ENCODE measurements at regions of chr11 and their contacts with region 1.

Region 1: GRCh38 chr11:107834995-107835394 is 23.6 kb downstream of the SLC35F2 start:
- DNase-seq: no peak
- H3K4me3 ChIP-seq: no peak overlapping the region
- H3K27ac ChIP-seq: no peak overlapping the region
- H3K4me1 ChIP-seq: peaks cover 0 to 5% (median 2%) of the 10 kb centered on the region in 4 experiments; a peak in 4 of 7 replicates
- H3K27me3 ChIP-seq: peaks cover 0 to 2% (median 0%) of the 10 kb centered on the region in 4 experiments; a peak in 1 of 7 replicates
- CTCF ChIP-seq: peak in 1 of 3 experiments; percentile 13; a peak in 1 of 4 replicates
- EP300 ChIP-seq: no peak
- POLR2A ChIP-seq: no peak
- RAD21 ChIP-seq: no peak

Region 2: GRCh38 chr11:107496011-107496410 is 339.0 kb before region 1 on chr11:
- CTCF ChIA-PET with region 1: no interaction called
- POLR2A ChIA-PET with region 1: no interaction called
- DNase-seq: no peak
- H3K4me3 ChIP-seq: no peak overlapping the region
- H3K27ac ChIP-seq: no peak overlapping the region
- H3K4me1 ChIP-seq: no peaks in the 10 kb centered on the region
- H3K27me3 ChIP-seq: no peaks in the 10 kb centered on the region
- CTCF ChIP-seq: no peak
- EP300 ChIP-seq: no peak
- POLR2A ChIP-seq: no peak
- RAD21 ChIP-seq: no peak

Region 3: GRCh38 chr11:107824668-107825369 is 10.2 kb before region 1 on chr11:
- CTCF ChIA-PET with region 1: interaction called, 10 read pairs
- POLR2A ChIA-PET with region 1: no interaction called
- DNase-seq: no peak
- H3K4me3 ChIP-seq: no peak overlapping the region
- H3K27ac ChIP-seq: no peak overlapping the region
- H3K4me1 ChIP-seq: no peaks in the 10 kb centered on the region
- H3K27me3 ChIP-seq: no peaks in the 10 kb centered on the region
- CTCF ChIP-seq: no peak
- EP300 ChIP-seq: no peak
- POLR2A ChIP-seq: no peak
- RAD21 ChIP-seq: no peak

Region 4: DNA sequence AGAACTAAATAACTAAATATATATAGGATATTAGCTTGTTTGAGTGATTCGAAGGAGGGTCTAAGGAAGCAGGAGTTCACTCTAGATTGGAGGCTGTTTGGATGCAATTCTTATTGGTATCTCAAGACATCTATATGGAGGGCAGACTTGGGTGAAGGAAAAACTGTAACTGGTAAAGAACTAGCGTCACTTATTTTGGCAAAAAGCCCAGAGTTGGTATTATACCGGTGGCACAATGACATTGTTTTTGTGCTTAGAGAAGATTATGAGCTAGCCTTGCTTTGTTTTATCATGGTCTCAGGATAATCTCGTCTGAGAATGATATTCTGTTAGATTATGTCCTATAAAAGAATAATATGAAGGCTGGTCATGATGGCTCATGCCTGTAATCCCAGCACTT is 29.6 kb after region 1 on chr11:
- CTCF ChIA-PET with region 1: no interaction called
- POLR2A ChIA-PET with region 1: no interaction called
- DNase-seq: no peak
- H3K4me3 ChIP-seq: no peak overlapping the region
- H3K27ac ChIP-seq: no peak overlapping the region
- H3K4me1 ChIP-seq: peaks cover 0 to 2% (median 0%) of the 10 kb centered on the region in 4 experiments; a peak in 1 of 7 replicates
- H3K27me3 ChIP-seq: no peaks in the 10 kb centered on the region
- CTCF ChIP-seq: no peak
- EP300 ChIP-seq: no peak
- POLR2A ChIP-seq: no peak
- RAD21 ChIP-seq: no peak

Measured in H1 (cell line).